Naive thymus-derived CD4-positive, alpha-beta T cell (primary cell): ENCODE measurements at regions of chr1 and their contacts with region 1.

Region 1: DNA sequence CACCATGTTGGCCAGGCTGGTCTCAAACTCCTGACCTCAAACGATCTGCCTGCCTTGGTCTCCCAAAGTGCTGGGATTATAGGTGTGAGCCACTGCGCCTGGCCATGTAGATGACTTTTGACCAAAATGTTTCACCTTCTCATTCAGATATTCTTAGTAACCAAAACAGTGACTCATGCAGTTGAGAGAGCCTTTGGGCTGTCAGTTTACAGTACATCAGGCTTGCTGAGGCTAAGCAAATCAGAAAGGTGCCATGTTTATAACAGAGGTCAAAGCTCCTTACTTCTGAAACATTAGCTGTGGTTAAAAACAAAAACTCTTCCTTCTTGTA is 21.0 kb downstream of the CNIH4 start:
- DNase-seq: no peak
- ATAC-seq: peak; percentile 46
- H3K4me3 ChIP-seq: no peak overlapping the region
- H3K4me3 Mint-ChIP-seq: peak overlapping the region; percentile 34 to 82 (median 64)
- H3K27ac ChIP-seq: no peak overlapping the region
- H3K27ac Mint-ChIP-seq: peak overlapping the region; percentile 53 to 93 (median 81)
- H3K4me1 ChIP-seq: peaks cover 74 to 76% of the 10 kb centered on the region in 2 donors
- H3K4me1 Mint-ChIP-seq: peaks cover 74 to 97% (median 92%) of the 10 kb centered on the region in 7 donors
- H3K27me3 ChIP-seq: no peaks in the 10 kb centered on the region
- H3K27me3 Mint-ChIP-seq: no peaks in the 10 kb centered on the region

Region 2: GRCh38 chr1:224392411-224393249 is 15.0 kb after region 1 on chr1:
- CTCF ChIA-PET with region 1: interaction called, 3 read pairs
- POLR2A ChIA-PET with region 1: interaction called, 11 read pairs
- intact Hi-C with region 1: loop called in 1 of 2 experiments (anchors 1 kb)
- DNase-seq: no peak
- ATAC-seq: no peak
- H3K4me3 ChIP-seq: no peak overlapping the region
- H3K4me3 Mint-ChIP-seq: no peak overlapping the region
- H3K27ac ChIP-seq: no peak overlapping the region
- H3K27ac Mint-ChIP-seq: peak overlapping the region in 6 of 9 donors; percentile 7 to 65 (median 50)
- H3K4me1 ChIP-seq: peaks cover 6% of the 10 kb centered on the region in 2 donors
- H3K4me1 Mint-ChIP-seq: peaks cover 6 to 40% (median 27%) of the 10 kb centered on the region in 7 donors
- H3K27me3 ChIP-seq: no peaks in the 10 kb centered on the region
- H3K27me3 Mint-ChIP-seq: no peaks in the 10 kb centered on the region

Region 3: DNA sequence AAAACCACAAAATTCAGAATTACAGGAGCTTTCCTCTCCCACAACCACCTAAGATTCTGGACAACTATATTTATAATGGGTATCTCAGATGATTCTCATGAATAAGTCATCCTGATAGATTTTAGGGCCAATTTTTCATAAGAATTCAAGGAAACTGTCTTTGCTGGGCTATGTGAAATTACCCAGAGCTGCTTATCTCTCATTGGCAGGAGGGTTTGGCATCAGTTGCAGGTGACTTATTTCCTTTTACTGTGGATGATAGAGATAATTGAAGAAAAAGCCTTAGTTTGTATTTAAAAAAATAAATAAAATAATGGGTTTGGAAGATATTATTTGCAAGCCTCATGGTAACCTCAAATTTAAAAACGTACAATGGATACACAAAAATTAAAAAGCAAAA is 95.2 kb after region 1 on chr1:
- CTCF ChIA-PET with region 1: no interaction called
- POLR2A ChIA-PET with region 1: no interaction called
- intact Hi-C with region 1: no loop called
- DNase-seq: no peak
- ATAC-seq: no peak
- H3K4me3 ChIP-seq: no peak overlapping the region
- H3K4me3 Mint-ChIP-seq: no peak overlapping the region
- H3K27ac ChIP-seq: no peak overlapping the region
- H3K27ac Mint-ChIP-seq: no peak overlapping the region
- H3K4me1 ChIP-seq: no peaks in the 10 kb centered on the region
- H3K4me1 Mint-ChIP-seq: no peaks in the 10 kb centered on the region
- H3K27me3 ChIP-seq: no peaks in the 10 kb centered on the region
- H3K27me3 Mint-ChIP-seq: peaks cover 0 to 7% (median 0%) of the 10 kb centered on the region in 5 donors

Region 4: DNA sequence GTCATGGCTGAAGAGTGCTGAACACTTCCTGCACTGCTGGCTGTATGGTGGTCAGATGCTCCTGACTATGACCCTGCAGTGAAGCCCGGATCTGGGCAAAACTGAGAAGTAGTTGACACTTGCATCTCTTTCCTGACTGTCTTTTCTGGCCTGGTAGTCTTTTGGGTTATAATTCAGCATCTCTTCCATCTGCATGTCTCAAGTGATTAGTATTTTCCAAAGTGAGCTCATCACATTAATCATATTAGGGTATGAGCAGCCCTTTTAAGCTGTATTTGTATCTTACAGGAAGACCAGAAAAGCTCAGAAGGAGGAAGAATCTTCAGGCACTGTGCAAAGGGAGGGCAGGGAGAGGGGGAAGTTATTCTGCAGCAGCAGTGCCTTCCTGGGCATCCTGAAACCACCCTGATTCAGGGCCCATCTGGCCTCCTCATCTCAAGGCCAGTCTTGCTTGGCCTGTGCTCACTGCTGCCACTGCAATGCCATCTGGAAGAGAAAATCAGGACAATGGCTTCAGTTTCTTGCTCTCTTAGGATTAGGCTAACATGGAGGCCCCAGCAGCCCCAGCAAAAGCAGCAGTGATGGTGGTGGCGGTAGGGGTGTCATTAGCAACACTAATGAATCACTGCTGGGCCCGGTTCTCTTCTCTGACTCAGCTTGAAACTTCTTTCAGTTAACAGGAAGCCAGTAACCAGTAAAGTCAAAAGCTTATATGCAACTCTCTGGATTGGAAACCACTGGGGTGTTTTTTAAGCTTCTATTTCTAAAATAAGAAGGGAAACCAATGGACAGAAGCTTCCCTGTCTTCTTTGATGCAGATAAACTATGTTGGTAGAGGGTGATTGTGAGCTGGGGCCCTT is 120.3 kb after region 1 on chr1:
- CTCF ChIA-PET with region 1: no interaction called
- POLR2A ChIA-PET with region 1: no interaction called
- intact Hi-C with region 1: no loop called
- DNase-seq: peak in 1 of 9 donors; percentile 62
- ATAC-seq: peak; percentile 88
- H3K4me3 ChIP-seq: no peak overlapping the region
- H3K4me3 Mint-ChIP-seq: peak overlapping the region in 2 of 10 donors; percentile 34 to 67
- H3K27ac ChIP-seq: no peak overlapping the region
- H3K27ac Mint-ChIP-seq: peak overlapping the region in 5 of 9 donors; percentile 19 to 91 (median 55)
- H3K4me1 ChIP-seq: peaks cover 0 to 14% of the 10 kb centered on the region in 2 donors
- H3K4me1 Mint-ChIP-seq: peaks cover 19 to 55% (median 25%) of the 10 kb centered on the region in 7 donors
- H3K27me3 ChIP-seq: no peaks in the 10 kb centered on the region
- H3K27me3 Mint-ChIP-seq: no peaks in the 10 kb centered on the region